ENCODE measurements at regions of chr4 and their contacts with region 1.

Region 1: GRCh38 chr4:8594097-8595038 is 1.8 kb downstream of the CPZ start:
- DNase-seq: peak; percentile 31
- H3K4me3 Mint-ChIP-seq: no peak overlapping the region
- H3K27ac Mint-ChIP-seq: no peak overlapping the region
- H3K4me1 Mint-ChIP-seq: no peaks in the 10 kb centered on the region
- H3K27me3 Mint-ChIP-seq: peaks cover 24% of the 10 kb centered on the region

Region 2: GRCh38 chr4:7679406-7680040 is 914.8 kb before region 1 on chr4:
- CTCF ChIA-PET with region 1: no interaction called
- POLR2A ChIA-PET with region 1: no interaction called
- intact Hi-C with region 1: no loop called
- DNase-seq: no peak
- H3K4me3 Mint-ChIP-seq: no peak overlapping the region
- H3K27ac Mint-ChIP-seq: no peak overlapping the region
- H3K4me1 Mint-ChIP-seq: no peaks in the 10 kb centered on the region
- H3K27me3 Mint-ChIP-seq: peaks cover 3% of the 10 kb centered on the region

Region 3: DNA sequence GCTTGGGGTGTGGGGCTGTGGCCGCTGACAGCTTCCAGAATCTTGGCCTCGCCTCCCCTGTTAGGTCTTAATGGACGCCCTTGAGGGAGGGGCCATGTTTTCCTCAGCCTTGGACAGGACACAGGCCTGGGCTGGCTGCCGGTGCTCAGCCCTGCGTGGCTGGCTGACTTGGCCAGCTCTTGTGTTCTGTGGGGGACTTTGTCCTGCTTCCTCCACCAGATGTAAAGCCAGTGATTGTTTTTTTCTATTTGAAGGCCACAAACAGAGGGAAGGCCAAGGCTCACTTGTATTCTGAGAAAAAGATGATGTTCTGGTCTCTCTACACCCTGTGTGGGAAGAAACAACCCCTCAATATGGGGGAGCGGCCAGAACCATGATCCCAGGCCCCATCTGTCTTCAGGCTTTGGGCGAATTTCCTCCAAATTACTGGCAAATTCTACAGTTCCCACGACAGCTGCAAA is 253.6 kb before region 1 on chr4:
- CTCF ChIA-PET with region 1: no interaction called
- POLR2A ChIA-PET with region 1: no interaction called
- intact Hi-C with region 1: no loop called
- DNase-seq: no peak
- H3K4me3 Mint-ChIP-seq: no peak overlapping the region
- H3K27ac Mint-ChIP-seq: no peak overlapping the region
- H3K4me1 Mint-ChIP-seq: no peaks in the 10 kb centered on the region
- H3K27me3 Mint-ChIP-seq: peaks cover 3% of the 10 kb centered on the region

Region 4: GRCh38 chr4:8468746-8469535 is 125.4 kb before region 1 on chr4:
- CTCF ChIA-PET with region 1: interaction called, 3 read pairs
- POLR2A ChIA-PET with region 1: no interaction called
- intact Hi-C with region 1: loop called (anchors 1 kb)
- DNase-seq: peak; percentile 70
- H3K4me3 Mint-ChIP-seq: no peak overlapping the region
- H3K27ac Mint-ChIP-seq: no peak overlapping the region
- H3K4me1 Mint-ChIP-seq: no peaks in the 10 kb centered on the region
- H3K27me3 Mint-ChIP-seq: no peaks in the 10 kb centered on the region